Spleen (tissue), 13 donors: ENCODE measurements at regions of chr3 and their contacts with region 1.

Region 1: DNA sequence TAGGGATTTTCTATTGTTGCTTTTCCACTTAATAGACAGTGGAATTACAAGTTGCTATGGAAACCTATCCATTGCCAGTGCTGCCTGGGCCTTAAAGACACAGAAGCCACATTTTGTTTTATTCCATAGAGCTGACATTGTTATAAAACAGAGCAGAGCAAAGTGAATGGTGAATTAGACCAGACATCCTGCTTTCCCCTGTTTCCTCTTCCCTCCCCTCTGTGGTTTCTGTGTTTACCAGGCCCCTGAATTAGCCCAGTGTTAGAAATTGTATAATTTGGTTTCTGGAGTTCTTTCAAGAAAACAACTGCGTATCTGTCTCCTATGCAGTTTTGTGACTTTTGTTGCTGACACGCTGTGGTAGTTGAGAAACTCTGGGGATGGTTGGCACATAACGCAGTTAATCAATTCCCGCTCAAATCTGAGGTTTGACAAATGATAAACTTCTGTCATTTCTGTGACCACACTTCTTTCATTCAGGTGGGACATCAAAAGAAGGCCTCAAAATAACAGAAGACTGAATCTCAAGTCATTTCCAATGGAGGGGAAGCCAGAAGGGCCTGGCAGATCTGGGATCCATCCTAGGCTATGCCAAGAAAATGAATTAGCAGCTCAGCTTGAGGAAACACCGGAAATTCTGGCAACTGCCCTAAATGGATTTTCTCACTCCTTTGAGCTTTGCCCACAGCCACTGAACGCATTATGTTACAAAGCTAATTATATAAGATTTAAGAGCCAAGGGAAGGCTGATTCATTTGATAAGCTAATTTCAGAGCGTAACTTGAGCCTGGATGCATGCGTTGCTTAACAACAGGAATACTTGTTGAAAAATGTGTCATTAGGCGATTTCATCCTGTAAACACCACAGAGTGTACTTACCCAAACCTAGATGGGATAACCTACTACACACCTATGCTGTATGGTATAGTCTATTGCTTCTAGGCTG is 46.9 kb downstream of the NR1D2 start:
- DNase-seq: no peak
- H3K4me3 ChIP-seq: no peak overlapping the region
- H3K27ac ChIP-seq: no peak overlapping the region
- H3K4me1 ChIP-seq: peaks cover 0 to 15% (median 0%) of the 10 kb centered on the region in 6 donors
- H3K27me3 ChIP-seq: no peaks in the 10 kb centered on the region
- CTCF ChIP-seq: no peak
- POLR2A ChIP-seq: no peak

Region 2: GRCh38 chr3:24237971-24238767 is 246.2 kb after region 1 on chr3:
- intact Hi-C with region 1: loop called (anchors 5 kb)
- DNase-seq: no peak
- H3K4me3 ChIP-seq: no peak overlapping the region
- H3K27ac ChIP-seq: no peak overlapping the region
- H3K4me1 ChIP-seq: peaks cover 0 to 14% (median 3%) of the 10 kb centered on the region in 6 donors
- H3K27me3 ChIP-seq: no peaks in the 10 kb centered on the region
- CTCF ChIP-seq: peak in 10 of 11 experiments; percentile 3 to 70 (median 56)
- POLR2A ChIP-seq: no peak

Region 3: GRCh38 chr3:24316811-24317383 is 324.9 kb after region 1 on chr3:
- intact Hi-C with region 1: no loop called
- DNase-seq: no peak
- H3K4me3 ChIP-seq: no peak overlapping the region
- H3K27ac ChIP-seq: no peak overlapping the region
- H3K4me1 ChIP-seq: no peaks in the 10 kb centered on the region
- H3K27me3 ChIP-seq: no peaks in the 10 kb centered on the region
- CTCF ChIP-seq: no peak
- POLR2A ChIP-seq: no peak